ENCODE measurements at regions of chr1 and their contacts with region 1.

Region 1: DNA sequence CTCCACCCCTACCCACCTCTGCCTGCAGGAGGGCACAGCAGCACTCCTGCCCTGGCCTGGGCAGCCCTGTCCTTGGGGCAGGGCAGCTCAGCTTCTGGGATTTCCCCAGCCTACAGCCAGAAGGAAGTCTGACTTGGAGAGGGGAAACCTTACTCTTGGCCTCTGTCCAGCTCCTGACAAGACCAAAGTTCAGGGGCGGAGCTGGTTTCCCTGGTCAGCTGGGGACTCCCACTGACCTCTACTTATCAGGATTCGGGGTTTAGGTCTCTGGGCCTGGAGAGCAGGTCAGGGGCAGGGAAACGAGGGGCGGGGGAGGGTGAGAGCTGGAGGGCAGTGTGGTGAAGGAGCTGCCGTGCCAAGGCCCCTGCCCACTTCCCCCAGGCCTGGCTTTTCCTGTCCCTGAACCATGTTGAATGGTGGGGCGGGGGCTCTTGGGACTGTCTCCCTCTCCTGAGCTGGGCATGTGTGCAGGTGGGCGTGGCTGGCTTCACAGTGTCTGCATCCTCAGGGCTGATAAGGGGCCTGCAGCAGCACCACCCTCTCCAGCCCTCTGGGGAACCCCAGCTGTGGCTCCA is 16.8 kb upstream of the ETV3 start:
- DNase-seq: no peak
- CTCF ChIP-seq: no peak

Region 2: DNA sequence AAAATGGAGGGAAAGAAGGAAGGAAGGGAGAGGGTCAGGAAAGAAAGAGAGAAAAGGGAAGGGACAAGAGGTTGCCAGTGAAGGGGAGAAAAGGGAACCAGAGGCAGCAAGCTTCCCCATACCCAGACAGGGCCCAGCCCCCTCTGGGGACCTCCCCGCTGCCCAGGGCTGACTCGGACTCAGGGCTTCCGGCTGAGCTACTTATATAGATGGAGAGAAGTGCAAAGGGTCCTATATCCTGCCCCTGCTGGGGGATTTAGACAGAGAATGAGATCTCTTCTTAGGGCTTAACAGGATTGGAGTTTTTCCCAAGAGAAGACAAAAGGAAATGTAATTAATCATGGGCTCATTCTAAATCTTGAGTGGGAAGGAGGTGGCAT is 55.4 kb before region 1 on chr1 and contains the start of gene ETV3L:
- in situ Hi-C with region 1: loop called (anchors 5 kb)
- DNase-seq: no peak
- CTCF ChIP-seq: no peak

Measured in GM13976 (cell line).